Right ventricle myocardium inferior (tissue), 1 donor: ENCODE measurements at regions of chr11 and their contacts with region 1.

Region 1: GRCh38 chr11:57456960-57457642 is 3.2 kb upstream of the RTN4RL2 start:
- DNase-seq: peak; percentile 95
- ATAC-seq: peak; percentile 89

Region 2: GRCh38 chr11:57480409-57481137 is 23.5 kb after region 1 on chr11:
- intact Hi-C with region 1: loop called (anchors 1 kb)
- DNase-seq: no peak
- ATAC-seq: peak; percentile 29

Region 3: DNA sequence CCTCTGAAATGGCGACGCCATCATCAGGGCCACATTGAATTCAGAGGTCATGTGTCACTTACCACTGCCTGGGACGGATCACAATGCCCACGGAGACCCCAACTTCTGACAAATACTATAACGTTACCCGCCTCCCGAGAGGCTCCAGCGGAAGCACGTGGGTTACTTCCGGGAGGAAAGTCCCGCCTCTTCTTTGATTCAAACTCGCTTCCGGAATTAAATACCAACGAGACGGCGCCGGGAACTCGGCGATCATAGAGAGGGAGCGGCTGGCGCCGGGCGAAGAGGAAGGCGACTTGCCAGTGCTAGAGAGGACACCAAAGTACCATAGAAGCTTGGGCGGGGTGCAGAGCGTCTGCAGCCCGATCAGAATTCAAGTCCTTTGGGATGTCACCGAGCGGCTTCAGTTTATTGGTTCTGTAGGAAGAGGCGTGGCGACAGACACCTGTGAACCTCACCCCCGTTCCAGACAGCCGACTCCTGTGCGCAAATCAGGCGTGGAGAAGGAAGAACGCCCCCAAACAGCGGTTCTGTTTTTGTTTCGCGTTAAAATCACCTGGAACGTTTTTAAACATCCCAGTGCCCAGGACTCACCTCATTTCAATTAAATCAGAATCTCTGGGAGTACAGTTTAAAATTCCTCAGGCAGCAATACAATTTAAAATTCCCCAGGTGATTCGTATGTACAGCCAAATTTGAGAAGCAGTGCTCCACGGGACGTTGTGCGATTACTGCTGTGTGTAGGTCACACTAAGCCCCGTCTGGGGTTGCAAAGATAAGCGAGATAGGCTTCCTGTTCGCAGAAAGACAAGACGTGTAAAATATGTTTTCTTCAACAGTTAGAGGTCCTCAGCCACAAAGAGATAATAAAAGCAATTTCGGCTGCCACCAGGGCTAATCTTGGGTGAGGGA is 73.8 kb after region 1 on chr11 and contains the start of gene TIMM10:
- intact Hi-C with region 1: loop called (anchors 1 kb)
- DNase-seq: peak; percentile 98
- ATAC-seq: peak; percentile 99
- total RNA-seq, gene TIMM10: 58.1 TPM

Region 4: DNA sequence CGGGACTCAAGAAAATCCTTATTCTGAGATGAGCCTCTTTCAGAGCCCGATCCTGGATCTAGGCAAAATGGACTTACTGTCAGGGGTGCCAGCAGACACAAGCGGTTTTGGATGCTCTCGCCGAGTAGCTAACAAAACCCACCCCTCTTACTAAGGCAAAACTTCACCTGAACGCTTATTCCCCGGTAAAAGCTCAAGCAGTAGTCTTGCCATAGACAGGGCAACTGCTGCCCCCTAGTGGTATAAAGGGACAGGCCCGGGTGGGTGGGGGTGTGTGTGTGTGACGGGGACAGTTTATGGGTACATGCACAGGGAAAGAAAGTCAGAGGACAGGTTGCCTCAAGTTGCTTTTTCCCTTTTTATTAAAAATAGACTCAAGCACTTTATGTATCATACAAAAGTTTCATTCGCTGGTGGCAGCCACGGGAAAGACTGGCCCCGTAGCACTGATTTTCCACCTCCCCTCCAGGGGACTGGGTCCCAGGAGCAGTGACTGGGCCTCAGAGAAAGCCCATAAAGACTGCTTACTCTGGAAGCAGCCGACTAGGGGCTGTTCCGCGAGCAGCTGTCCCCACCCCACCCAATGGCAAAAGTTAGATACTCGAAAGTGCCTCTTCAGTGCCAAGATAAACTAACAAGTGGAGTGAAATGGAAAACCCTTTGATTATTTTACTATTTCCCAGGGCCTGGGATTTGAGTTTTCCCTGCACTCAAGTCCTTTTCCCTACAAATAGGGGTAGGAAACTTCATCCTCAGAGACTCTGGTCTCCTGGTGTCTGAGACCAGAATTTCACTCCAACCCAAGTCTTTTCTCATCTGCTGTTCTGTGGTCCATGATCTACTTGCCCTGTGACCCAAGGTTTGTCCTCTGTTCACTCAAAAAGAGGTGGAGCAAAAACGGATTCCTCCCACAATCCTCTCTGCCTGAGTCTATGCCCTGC is 187.9 kb after region 1 on chr11:
- intact Hi-C with region 1: loop called (anchors 2 kb)
- DNase-seq: peak; percentile 88
- ATAC-seq: peak; percentile 76

Region 5: GRCh38 chr11:58513747-58514367 is 1056.8 kb after region 1 on chr11:
- intact Hi-C with region 1: loop called (anchors 10 kb)
- DNase-seq: no peak
- ATAC-seq: no peak